ENCODE measurements at regions of chr1 and their contacts with region 1.

Region 1: GRCh38 chr1:200669314-200670241 is at the start of gene DDX59:
- DNase-seq: peak; percentile 100
- ATAC-seq: peak; percentile 76
- H3K4me3 ChIP-seq: peak within 1 kb of the TSS; percentile 86
- H3K27ac ChIP-seq: peak within 1 kb of the TSS; percentile 97
- H3K4me1 ChIP-seq: peaks cover 28% of the 10 kb centered on the region
- H3K27me3 ChIP-seq: no peaks in the 10 kb centered on the region
- CTCF ChIP-seq: no peak
- total RNA-seq, gene DDX59: 24.6 and 29.4 TPM in 2 replicates

Region 2: GRCh38 chr1:200699871-200700270 is 30.3 kb after region 1 on chr1:
- CTCF ChIA-PET with region 1: interaction called, 11 read pairs
- POLR2A ChIA-PET with region 1: no interaction called
- intact Hi-C with region 1: no loop called
- DNase-seq: no peak
- ATAC-seq: no peak
- H3K4me3 ChIP-seq: no peak overlapping the region
- H3K27ac ChIP-seq: no peak overlapping the region
- H3K4me1 ChIP-seq: no peaks in the 10 kb centered on the region
- H3K27me3 ChIP-seq: no peaks in the 10 kb centered on the region
- CTCF ChIP-seq: no peak

Region 3: DNA sequence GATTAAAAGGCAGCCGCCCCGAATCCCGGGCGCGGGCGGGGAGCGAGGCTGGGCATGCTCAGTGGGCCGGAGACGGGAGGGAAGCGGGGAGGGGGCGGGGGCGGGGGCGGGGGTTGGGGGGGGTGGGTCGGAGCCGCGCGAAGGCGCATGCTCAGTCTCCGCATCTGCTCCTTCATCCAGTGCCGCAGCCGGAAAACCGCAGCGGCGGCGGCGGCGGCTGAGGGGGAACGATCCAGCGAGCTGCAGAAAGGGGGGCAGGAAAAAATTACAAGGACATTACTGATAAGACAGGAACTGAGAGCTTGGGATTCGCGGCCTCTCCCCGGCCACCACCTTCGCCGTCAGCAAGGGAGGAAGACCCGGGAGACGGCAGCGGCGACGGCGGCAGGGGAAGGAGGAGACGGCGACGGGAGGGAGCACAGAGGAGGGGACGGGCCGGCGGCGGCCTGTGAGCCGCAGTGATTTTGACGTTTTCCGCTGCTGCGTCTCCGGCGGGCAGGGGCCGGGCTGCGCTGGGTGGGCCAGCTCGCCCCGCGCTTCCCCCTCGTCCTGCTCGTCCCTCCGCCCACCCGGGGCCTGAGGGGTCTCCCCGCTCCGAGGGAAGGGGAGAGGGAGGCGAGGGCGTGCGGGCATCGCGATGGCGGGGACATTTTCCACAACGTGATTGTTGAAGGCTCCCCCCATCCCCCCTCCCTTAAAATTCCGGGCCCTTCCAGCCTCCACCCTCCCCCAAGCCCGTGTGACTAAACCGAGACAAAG is 69.3 kb after region 1 on chr1 and contains the start of gene CAMSAP2:
- CTCF ChIA-PET with region 1: no interaction called
- POLR2A ChIA-PET with region 1: interaction called, 9 read pairs
- intact Hi-C with region 1: loop called (anchors 1 kb)
- DNase-seq: peak; percentile 96
- ATAC-seq: peak; percentile 75
- H3K4me3 ChIP-seq: peak within 1 kb of the TSS; percentile 89
- H3K27ac ChIP-seq: peak within 1 kb of the TSS; percentile 90
- H3K4me1 ChIP-seq: peaks cover 39% of the 10 kb centered on the region
- H3K27me3 ChIP-seq: no peaks in the 10 kb centered on the region
- CTCF ChIP-seq: no peak
- total RNA-seq, gene CAMSAP2: 28.6 and 29.5 TPM in 2 replicates

Region 4: GRCh38 chr1:200802865-200803512 is 133.4 kb after region 1 on chr1:
- CTCF ChIA-PET with region 1: interaction called, 12 read pairs
- POLR2A ChIA-PET with region 1: no interaction called
- intact Hi-C with region 1: loop called (anchors 2 kb)
- DNase-seq: peak; percentile 98
- ATAC-seq: peak; percentile 100
- H3K4me3 ChIP-seq: no peak overlapping the region
- H3K27ac ChIP-seq: no peak overlapping the region
- H3K4me1 ChIP-seq: no peaks in the 10 kb centered on the region
- H3K27me3 ChIP-seq: no peaks in the 10 kb centered on the region
- CTCF ChIP-seq: peak; percentile 100